CD4-positive, alpha-beta T cell (primary cell): ENCODE measurements at regions of chr2 and their contacts with region 1.

Region 1: GRCh38 chr2:227774011-227774624 is 28.4 kb downstream of the SCYGR8 start:
- DNase-seq: peak in 3 of 14 experiments; percentile 13 to 46 (median 32)
- ATAC-seq: no peak
- H3K4me3 ChIP-seq: no peak overlapping the region
- H3K4me3 Mint-ChIP-seq: no peak overlapping the region
- H3K27ac ChIP-seq: no peak overlapping the region
- H3K27ac Mint-ChIP-seq: no peak overlapping the region
- H3K4me1 ChIP-seq: no peaks in the 10 kb centered on the region
- H3K4me1 Mint-ChIP-seq: no peaks in the 10 kb centered on the region
- H3K27me3 ChIP-seq: no peaks in the 10 kb centered on the region
- H3K27me3 Mint-ChIP-seq: peaks cover 4% of the 10 kb centered on the region
- CTCF ChIP-seq: no peak

Region 2: GRCh38 chr2:227188292-227188691 is 585.8 kb before region 1 on chr2:
- CTCF ChIA-PET with region 1: no interaction called
- POLR2A ChIA-PET with region 1: no interaction called
- intact Hi-C with region 1: no loop called
- DNase-seq: no peak
- ATAC-seq: no peak
- H3K4me3 ChIP-seq: no peak overlapping the region
- H3K4me3 Mint-ChIP-seq: no peak overlapping the region
- H3K27ac ChIP-seq: no peak overlapping the region
- H3K27ac Mint-ChIP-seq: no peak overlapping the region
- H3K4me1 ChIP-seq: no peaks in the 10 kb centered on the region
- H3K4me1 Mint-ChIP-seq: no peaks in the 10 kb centered on the region
- H3K27me3 ChIP-seq: peaks cover 0 to 4% of the 10 kb centered on the region in 2 experiments
- H3K27me3 Mint-ChIP-seq: peaks cover 43% of the 10 kb centered on the region
- CTCF ChIP-seq: no peak

Region 3: GRCh38 chr2:227862227-227862740 is 88.2 kb after region 1 on chr2:
- CTCF ChIA-PET with region 1: no interaction called
- POLR2A ChIA-PET with region 1: no interaction called
- intact Hi-C with region 1: loop called in 1 of 2 experiments (anchors 5 kb)
- DNase-seq: peak in 4 of 14 experiments; percentile 52 to 74 (median 62)
- ATAC-seq: no peak
- H3K4me3 ChIP-seq: no peak overlapping the region
- H3K4me3 Mint-ChIP-seq: no peak overlapping the region
- H3K27ac ChIP-seq: no peak overlapping the region
- H3K27ac Mint-ChIP-seq: no peak overlapping the region
- H3K4me1 ChIP-seq: no peaks in the 10 kb centered on the region
- H3K4me1 Mint-ChIP-seq: no peaks in the 10 kb centered on the region
- H3K27me3 ChIP-seq: no peaks in the 10 kb centered on the region
- H3K27me3 Mint-ChIP-seq: no peaks in the 10 kb centered on the region
- CTCF ChIP-seq: peak; percentile 49